MCF 10A (cell line): ENCODE measurements at regions of chr1 and their contacts with region 1.

Region 1: DNA sequence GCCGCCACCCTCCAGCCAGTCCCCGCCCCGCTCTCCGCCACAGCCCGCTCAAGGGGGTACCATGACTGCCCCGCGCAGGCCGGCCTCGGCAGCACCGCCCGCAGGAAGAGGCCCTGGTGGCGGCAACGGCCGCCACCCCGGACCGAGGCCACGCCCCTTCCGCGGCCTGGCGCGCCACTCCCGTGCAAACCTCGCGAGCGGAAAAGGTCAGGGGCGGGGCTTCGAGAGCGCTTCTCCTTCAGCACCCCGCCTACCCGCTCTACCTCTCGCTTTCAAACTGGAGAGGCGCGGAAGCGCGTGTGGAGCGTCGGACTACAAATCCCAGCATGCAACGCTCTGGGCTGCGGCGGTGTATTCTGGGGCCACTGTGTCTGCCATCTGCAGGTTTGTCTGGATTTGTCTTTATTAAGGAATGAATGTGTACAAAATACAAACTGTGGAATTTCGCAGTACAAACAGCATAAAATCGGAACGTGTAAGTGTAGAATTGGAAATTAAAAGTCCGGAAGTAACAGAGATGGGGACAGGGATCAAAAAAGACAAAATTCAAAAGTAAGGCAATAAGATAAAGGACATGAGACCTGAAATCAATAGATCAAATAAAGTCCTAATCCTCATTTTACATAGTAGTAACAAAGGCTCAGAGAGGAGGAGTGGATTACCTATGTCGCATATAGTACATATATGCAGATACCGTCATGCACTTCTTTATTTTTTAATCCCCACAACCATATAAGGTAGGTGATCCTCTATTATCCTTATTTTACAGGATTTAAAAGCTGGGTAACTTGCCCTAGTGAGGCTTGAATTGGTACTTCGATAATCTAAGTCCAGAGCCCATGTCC is 464 bp upstream of the ADSS2 start:
- DNase-seq: peak; percentile 100
- H3K4me3 Mint-ChIP-seq: peak overlapping the region; percentile 70
- H3K27ac Mint-ChIP-seq: peak overlapping the region; percentile 66
- H3K4me1 Mint-ChIP-seq: peaks cover 39% of the 10 kb centered on the region
- H3K27me3 Mint-ChIP-seq: no peaks in the 10 kb centered on the region
- CTCF ChIP-seq: peak; percentile 45

Region 2: DNA sequence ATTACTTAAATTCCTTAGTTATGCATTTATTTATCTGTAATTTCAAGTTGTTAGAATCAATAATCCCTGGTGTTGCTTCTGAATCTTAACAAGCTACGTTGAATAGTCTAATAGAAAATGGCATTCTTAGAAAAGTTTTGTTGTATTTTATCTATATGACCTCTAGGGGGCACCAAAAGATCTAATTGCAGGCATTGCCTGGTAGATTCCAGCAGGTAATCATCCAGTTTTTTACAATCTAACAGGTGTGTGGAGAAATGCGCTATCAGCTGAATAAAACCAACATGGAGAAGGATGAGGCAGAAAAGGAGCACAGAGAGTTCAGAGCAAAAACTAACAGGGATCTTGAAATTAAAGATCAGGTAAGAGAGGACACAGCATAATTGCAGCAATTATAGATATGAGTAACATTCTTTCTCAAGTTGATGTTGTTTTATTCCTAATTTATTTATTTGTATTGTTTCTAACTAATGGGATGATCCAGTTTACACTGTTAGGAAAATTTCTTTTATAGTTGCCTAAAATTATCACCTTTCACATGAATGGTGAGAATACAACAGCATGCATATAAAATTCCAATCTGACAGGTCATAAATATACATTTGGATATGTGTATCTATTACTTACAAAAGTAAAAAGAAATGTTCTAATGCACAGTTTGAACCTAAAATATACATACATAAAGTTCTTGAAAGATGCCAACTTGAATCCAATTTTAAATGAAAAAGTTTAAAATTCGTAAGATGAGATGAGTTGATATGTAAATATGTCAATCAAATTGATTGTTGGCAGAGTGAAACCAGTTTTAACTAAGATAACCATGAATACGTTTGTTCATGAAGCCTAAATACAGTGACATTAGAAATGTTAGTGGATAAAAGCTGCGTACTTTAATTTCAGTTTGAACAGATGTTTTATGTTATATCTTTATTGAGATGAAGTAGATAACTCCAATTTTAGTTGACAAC is 1107.9 kb before region 1 on chr1:
- CTCF ChIA-PET with region 1: no interaction called
- POLR2A ChIA-PET with region 1: no interaction called
- intact Hi-C with region 1: loop called (anchors 2 kb)
- DNase-seq: peak; percentile 79
- H3K4me3 Mint-ChIP-seq: no peak overlapping the region
- H3K27ac Mint-ChIP-seq: no peak overlapping the region
- H3K4me1 Mint-ChIP-seq: peaks cover 5% of the 10 kb centered on the region
- H3K27me3 Mint-ChIP-seq: no peaks in the 10 kb centered on the region
- CTCF ChIP-seq: peak; percentile 91

Region 3: GRCh38 chr1:244302889-244303613 is 149.1 kb before region 1 on chr1:
- CTCF ChIA-PET with region 1: interaction called, 10 read pairs
- POLR2A ChIA-PET with region 1: interaction called, 6 read pairs
- intact Hi-C with region 1: loop called (anchors 1 kb)
- DNase-seq: peak; percentile 77
- H3K4me3 Mint-ChIP-seq: no peak overlapping the region
- H3K27ac Mint-ChIP-seq: peak overlapping the region; percentile 11
- H3K4me1 Mint-ChIP-seq: peaks cover 40% of the 10 kb centered on the region
- H3K27me3 Mint-ChIP-seq: no peaks in the 10 kb centered on the region
- CTCF ChIP-seq: no peak

Region 4: GRCh38 chr1:244371242-244372141 is 80.7 kb before region 1 on chr1:
- CTCF ChIA-PET with region 1: interaction called, 3 read pairs
- POLR2A ChIA-PET with region 1: interaction called, 12 read pairs
- intact Hi-C with region 1: no loop called
- DNase-seq: peak; percentile 77
- H3K4me3 Mint-ChIP-seq: no peak overlapping the region
- H3K27ac Mint-ChIP-seq: peak overlapping the region; percentile 9
- H3K4me1 Mint-ChIP-seq: peaks cover 29% of the 10 kb centered on the region
- H3K27me3 Mint-ChIP-seq: no peaks in the 10 kb centered on the region
- CTCF ChIP-seq: no peak

Region 5: DNA sequence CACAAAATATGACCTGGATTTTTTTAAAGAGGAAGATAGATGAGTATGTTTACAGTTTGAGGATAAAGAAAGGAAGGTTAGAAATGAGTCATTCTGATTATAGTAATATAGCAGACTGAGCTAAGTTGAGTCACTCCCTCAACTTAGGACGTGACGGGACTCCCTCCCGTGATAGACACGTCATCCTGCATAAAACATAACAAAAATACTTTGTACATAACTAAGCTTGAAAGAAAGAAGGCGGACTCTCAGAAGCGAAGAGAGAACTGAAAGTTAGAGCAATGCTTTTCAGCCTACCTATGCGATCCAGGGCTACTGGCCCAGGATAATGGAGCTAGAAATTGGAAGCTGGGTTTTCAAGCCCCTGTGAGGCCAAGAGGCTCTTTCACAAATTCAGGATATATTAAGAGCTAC is 147.8 kb after region 1 on chr1:
- CTCF ChIA-PET with region 1: interaction called, 5 read pairs
- POLR2A ChIA-PET with region 1: interaction called, 6 read pairs
- intact Hi-C with region 1: loop called (anchors 2 kb)
- DNase-seq: peak; percentile 97
- H3K4me3 Mint-ChIP-seq: peak overlapping the region; percentile 77
- H3K27ac Mint-ChIP-seq: peak overlapping the region; percentile 99
- H3K4me1 Mint-ChIP-seq: peaks cover 12% of the 10 kb centered on the region
- H3K27me3 Mint-ChIP-seq: no peaks in the 10 kb centered on the region
- CTCF ChIP-seq: no peak

Region 6: GRCh38 chr1:244864253-244865027 is 412.3 kb after region 1 on chr1 and contains the start of gene HNRNPU:
- CTCF ChIA-PET with region 1: no interaction called
- POLR2A ChIA-PET with region 1: interaction called, 34 read pairs
- intact Hi-C with region 1: no loop called
- DNase-seq: peak; percentile 99
- H3K4me3 Mint-ChIP-seq: peak within 1 kb of the TSS; percentile 93
- H3K27ac Mint-ChIP-seq: peak within 1 kb of the TSS; percentile 96
- H3K4me1 Mint-ChIP-seq: peaks cover 32% of the 10 kb centered on the region
- H3K27me3 Mint-ChIP-seq: no peaks in the 10 kb centered on the region
- CTCF ChIP-seq: peak; percentile 51
- total RNA-seq, gene HNRNPU: 454 and 572 TPM in 2 replicates